GM12878 (cell line): ENCODE measurements at regions of chr4 and their contacts with region 1.

Region 1: DNA sequence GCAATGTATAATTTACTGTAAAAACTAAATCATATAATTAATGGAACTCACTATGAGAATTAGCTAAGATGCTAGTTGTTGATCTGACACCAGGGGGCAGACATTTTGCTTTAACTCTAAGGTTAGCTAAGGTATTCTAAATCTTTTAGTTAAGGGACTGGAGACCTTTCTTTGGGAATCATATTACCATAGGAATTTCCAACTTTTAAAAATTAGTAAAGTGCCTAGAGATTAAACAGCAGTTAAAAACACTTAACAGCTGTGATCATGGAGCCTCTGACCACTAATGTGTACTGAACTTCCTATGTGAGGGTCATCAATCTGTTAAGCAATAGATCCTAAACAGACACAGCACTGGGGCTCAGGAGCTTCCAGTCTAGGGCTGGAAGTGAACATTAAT is 226.6 kb downstream of the NSUN7 start:
- DNase-seq: no peak
- ATAC-seq: peak; percentile 80
- H3K4me3 ChIP-seq: no peak overlapping the region
- H3K27ac ChIP-seq: no peak overlapping the region
- H3K4me1 ChIP-seq: no peaks in the 10 kb centered on the region
- H3K27me3 ChIP-seq: no peaks in the 10 kb centered on the region
- CTCF ChIP-seq: peak; percentile 48 to 62 (median 59); a peak in 5 of 6 replicates
- EP300 ChIP-seq: no peak
- POLR2A ChIP-seq: no peak
- RAD21 ChIP-seq: peak; percentile 72

Region 2: GRCh38 chr4:40924096-40924792 is 52.1 kb before region 1 on chr4:
- CTCF ChIA-PET with region 1: interaction called, 24 read pairs
- POLR2A ChIA-PET with region 1: no interaction called
- RAD21 ChIA-PET with region 1: interaction called, 10 read pairs
- SMC1A ChIA-PET with region 1: interaction called, 67 read pairs
- in situ Hi-C with region 1: no loop called
- intact Hi-C with region 1: loop called (anchors 5 kb)
- DNase-seq: peak; percentile 12
- ATAC-seq: peak; percentile 94
- H3K4me3 ChIP-seq: no peak overlapping the region
- H3K27ac ChIP-seq: no peak overlapping the region; the same call in 1 of the 2 replicates
- H3K4me1 ChIP-seq: no peaks in the 10 kb centered on the region
- H3K27me3 ChIP-seq: no peaks in the 10 kb centered on the region
- CTCF ChIP-seq: peak; percentile 76 to 95 (median 90)
- EP300 ChIP-seq: no peak
- POLR2A ChIP-seq: no peak
- RAD21 ChIP-seq: peak; percentile 57

Region 3: DNA sequence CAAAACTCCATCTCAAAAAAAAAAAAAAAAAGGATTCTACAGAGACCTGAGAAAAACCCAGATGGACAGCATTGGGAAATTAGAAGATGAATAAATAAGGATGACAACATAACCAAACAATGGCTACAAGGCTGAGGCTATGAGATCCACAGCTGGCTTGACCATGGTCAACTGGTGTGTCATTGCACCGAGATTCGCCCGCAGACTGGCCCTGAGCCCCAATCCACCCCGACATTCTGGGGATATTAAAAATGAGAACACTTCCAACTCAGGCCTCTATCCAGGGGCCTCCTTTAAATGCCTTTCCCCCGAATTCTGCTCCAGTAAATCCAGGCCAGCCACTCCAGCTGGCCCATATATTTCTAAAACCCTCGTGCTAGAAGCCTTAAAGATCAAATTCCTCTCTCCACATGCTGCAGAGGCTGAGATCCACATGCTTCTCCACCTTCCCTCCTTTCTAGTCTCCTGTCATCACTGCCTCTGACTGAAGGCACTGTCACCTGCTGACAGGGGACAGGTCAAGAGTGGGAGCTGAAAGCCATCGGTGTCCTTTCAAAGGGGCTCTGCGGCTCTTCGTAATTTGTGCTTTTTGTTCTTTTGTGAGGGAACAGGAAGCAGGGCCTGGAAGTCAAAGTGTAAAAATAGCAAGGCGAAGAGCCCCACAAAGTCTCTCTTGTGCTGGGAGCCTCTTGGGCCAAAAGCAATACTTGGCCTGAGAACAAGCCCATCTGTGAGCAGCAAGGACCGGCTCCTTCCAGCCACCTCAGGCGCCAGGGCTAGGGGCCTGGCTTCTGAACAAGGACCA is 22.9 kb before region 1 on chr4:
- CTCF ChIA-PET with region 1: interaction called, 13 read pairs
- POLR2A ChIA-PET with region 1: no interaction called
- RAD21 ChIA-PET with region 1: interaction called, 3 read pairs
- SMC1A ChIA-PET with region 1: interaction called, 6 read pairs
- in situ Hi-C with region 1: no loop called
- intact Hi-C with region 1: no loop called
- DNase-seq: no peak
- ATAC-seq: no peak
- H3K4me3 ChIP-seq: no peak overlapping the region
- H3K27ac ChIP-seq: no peak overlapping the region
- H3K4me1 ChIP-seq: peaks cover 5% of the 10 kb centered on the region
- H3K27me3 ChIP-seq: no peaks in the 10 kb centered on the region
- CTCF ChIP-seq: no peak
- EP300 ChIP-seq: no peak
- POLR2A ChIP-seq: no peak
- RAD21 ChIP-seq: no peak

Region 4: GRCh38 chr4:40992472-40993295 is 16.3 kb after region 1 on chr4:
- CTCF ChIA-PET with region 1: interaction called, 98 read pairs
- POLR2A ChIA-PET with region 1: interaction called, 3 read pairs
- RAD21 ChIA-PET with region 1: interaction called, 27 read pairs
- SMC1A ChIA-PET with region 1: interaction called, 47 read pairs
- in situ Hi-C with region 1: no loop called
- intact Hi-C with region 1: no loop called
- DNase-seq: peak; percentile 78
- ATAC-seq: peak; percentile 85
- H3K4me3 ChIP-seq: peak overlapping the region; percentile 8
- H3K27ac ChIP-seq: peak overlapping the region; percentile 98
- H3K4me1 ChIP-seq: peaks cover 38% of the 10 kb centered on the region
- H3K27me3 ChIP-seq: no peaks in the 10 kb centered on the region
- CTCF ChIP-seq: no peak
- EP300 ChIP-seq: peak in 1 of 2 experiments; percentile 39; a peak in 1 of 4 replicates
- POLR2A ChIP-seq: peak; percentile 71
- RAD21 ChIP-seq: no peak

Region 5: GRCh38 chr4:41061482-41062185 is 85.3 kb after region 1 on chr4:
- CTCF ChIA-PET with region 1: interaction called, 10 read pairs
- POLR2A ChIA-PET with region 1: no interaction called
- RAD21 ChIA-PET with region 1: interaction called, 3 read pairs
- SMC1A ChIA-PET with region 1: interaction called, 7 read pairs
- in situ Hi-C with region 1: no loop called
- intact Hi-C with region 1: no loop called
- DNase-seq: no peak
- ATAC-seq: no peak
- H3K4me3 ChIP-seq: no peak overlapping the region
- H3K27ac ChIP-seq: no peak overlapping the region
- H3K4me1 ChIP-seq: no peaks in the 10 kb centered on the region; the same call in 1 of the 2 replicates
- H3K27me3 ChIP-seq: no peaks in the 10 kb centered on the region
- CTCF ChIP-seq: no peak
- EP300 ChIP-seq: no peak
- POLR2A ChIP-seq: no peak
- RAD21 ChIP-seq: no peak

Region 6: DNA sequence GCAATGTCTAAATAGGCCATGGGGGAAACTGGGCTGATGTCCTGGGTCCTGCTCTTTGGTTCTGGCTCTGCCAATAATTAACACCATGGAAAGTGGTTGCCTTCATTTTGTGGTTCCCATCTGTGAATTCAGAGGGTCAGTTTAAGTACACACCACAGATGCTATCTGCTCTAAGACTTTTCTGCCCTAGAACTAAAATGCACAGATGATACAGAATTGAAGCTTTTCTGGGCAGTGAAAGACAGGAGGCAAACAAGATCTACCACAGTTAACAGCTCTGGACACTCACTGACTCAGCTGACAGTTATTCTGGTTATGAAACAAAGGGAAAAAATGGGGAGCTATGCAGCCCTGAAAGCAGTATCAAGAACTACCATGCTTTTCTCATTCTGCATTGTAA is 200.7 kb after region 1 on chr4:
- CTCF ChIA-PET with region 1: interaction called, 15 read pairs
- POLR2A ChIA-PET with region 1: no interaction called
- RAD21 ChIA-PET with region 1: interaction called, 4 read pairs
- SMC1A ChIA-PET with region 1: interaction called, 6 read pairs
- in situ Hi-C with region 1: no loop called
- intact Hi-C with region 1: no loop called
- DNase-seq: no peak
- ATAC-seq: peak; percentile 41
- H3K4me3 ChIP-seq: no peak overlapping the region
- H3K27ac ChIP-seq: peak overlapping the region; percentile 28; the same call in 1 of the 2 replicates
- H3K4me1 ChIP-seq: peaks cover 16% of the 10 kb centered on the region
- H3K27me3 ChIP-seq: no peaks in the 10 kb centered on the region
- CTCF ChIP-seq: no peak; a peak in 1 of 6 replicates
- EP300 ChIP-seq: no peak
- POLR2A ChIP-seq: no peak
- RAD21 ChIP-seq: no peak

Region 7: DNA sequence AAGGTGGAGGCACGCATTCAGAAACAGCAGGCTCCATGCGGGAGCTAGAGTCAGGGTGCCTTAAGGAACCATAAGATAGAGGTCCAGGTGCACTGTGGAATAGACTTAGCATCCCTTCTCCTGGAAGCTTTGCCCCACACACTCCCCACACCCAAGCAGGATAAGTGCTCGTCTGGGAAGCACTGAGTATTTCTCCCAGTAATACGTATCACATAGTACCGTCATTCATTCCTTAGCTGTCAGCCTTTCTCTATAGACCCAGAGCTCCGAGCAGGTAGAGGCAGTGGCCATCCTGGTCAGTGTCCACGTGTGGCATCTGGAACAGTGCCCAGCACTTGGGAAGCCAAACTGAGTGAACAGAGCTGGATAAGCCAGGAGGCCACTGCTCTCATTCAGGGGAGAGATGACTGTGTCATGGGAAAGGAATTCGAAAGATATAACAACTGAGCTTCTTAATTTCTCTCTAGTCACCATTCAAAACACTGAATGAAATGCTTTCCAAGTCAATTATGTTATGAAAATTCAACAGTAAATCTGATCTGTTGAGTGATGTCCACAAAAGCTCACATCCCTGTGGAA is 228.1 kb after region 1 on chr4:
- CTCF ChIA-PET with region 1: interaction called, 567 read pairs
- POLR2A ChIA-PET with region 1: interaction called, 5 read pairs
- RAD21 ChIA-PET with region 1: interaction called, 262 read pairs
- SMC1A ChIA-PET with region 1: interaction called, 362 read pairs
- in situ Hi-C with region 1: no loop called
- intact Hi-C with region 1: no loop called
- DNase-seq: no peak
- ATAC-seq: no peak
- H3K4me3 ChIP-seq: no peak overlapping the region
- H3K27ac ChIP-seq: no peak overlapping the region
- H3K4me1 ChIP-seq: peaks cover 6% of the 10 kb centered on the region; the same call in 1 of the 2 replicates
- H3K27me3 ChIP-seq: no peaks in the 10 kb centered on the region
- CTCF ChIP-seq: no peak
- EP300 ChIP-seq: no peak
- POLR2A ChIP-seq: no peak
- RAD21 ChIP-seq: no peak